ENCODE measurements at regions of chr10 and their contacts with region 1.

Region 1: GRCh38 chr10:110354322-110354766 is 49.6 kb upstream of the SMNDC1 start:
- DNase-seq: peak; percentile 49 to 75 (median 56)
- ATAC-seq: peak; percentile 94
- H3K4me3 ChIP-seq: no peak overlapping the region
- H3K27ac ChIP-seq: no peak overlapping the region
- H3K4me1 ChIP-seq: peaks cover 0 to 8% of the 10 kb centered on the region in 2 experiments; a peak in 3 of 5 replicates
- H3K27me3 ChIP-seq: peaks cover 0 to 45% of the 10 kb centered on the region in 2 experiments; a peak in 4 of 5 replicates
- CTCF ChIP-seq: peak; percentile 74 to 83 (median 81)
- EP300 ChIP-seq: no peak
- POLR2A ChIP-seq: no peak
- RAD21 ChIP-seq: peak; percentile 49 to 83

Region 2: GRCh38 chr10:110395725-110396651 is 41.6 kb after region 1 on chr10:
- CTCF ChIA-PET with region 1: no interaction called
- POLR2A ChIA-PET with region 1: no interaction called
- in situ Hi-C with region 1: no loop called
- intact Hi-C with region 1: loop called (anchors 5 kb)
- DNase-seq: peak in 3 of 4 experiments; percentile 27 to 44 (median 32)
- ATAC-seq: no peak
- H3K4me3 ChIP-seq: no peak overlapping the region
- H3K27ac ChIP-seq: no peak overlapping the region
- H3K4me1 ChIP-seq: peaks cover 0 to 11% of the 10 kb centered on the region in 2 experiments; a peak in 4 of 5 replicates
- H3K27me3 ChIP-seq: peaks cover 2 to 27% of the 10 kb centered on the region in 2 experiments; a peak in 3 of 5 replicates
- CTCF ChIP-seq: no peak
- EP300 ChIP-seq: 0 out of 2 replicates have a peak, but pooled peaks have one; percentile 38
- POLR2A ChIP-seq: no peak
- RAD21 ChIP-seq: no peak

Region 3: GRCh38 chr10:110535958-110536891 is 181.9 kb after region 1 on chr10:
- CTCF ChIA-PET with region 1: interaction called, 4 read pairs
- POLR2A ChIA-PET with region 1: no interaction called
- in situ Hi-C with region 1: no loop called
- intact Hi-C with region 1: loop called (anchors 1 kb)
- DNase-seq: peak in 2 of 4 experiments; percentile 28 to 54
- ATAC-seq: peak; percentile 92
- H3K4me3 ChIP-seq: no peak overlapping the region
- H3K27ac ChIP-seq: no peak overlapping the region
- H3K4me1 ChIP-seq: peaks cover 0 to 4% of the 10 kb centered on the region in 2 experiments; a peak in 2 of 5 replicates
- H3K27me3 ChIP-seq: no peaks in the 10 kb centered on the region
- CTCF ChIP-seq: peak; percentile 60 to 75 (median 62)
- EP300 ChIP-seq: no peak
- POLR2A ChIP-seq: no peak
- RAD21 ChIP-seq: peak; percentile 77 to 89

Region 4: GRCh38 chr10:110547139-110547761 is 192.9 kb after region 1 on chr10:
- CTCF ChIA-PET with region 1: interaction called, 3 read pairs
- POLR2A ChIA-PET with region 1: interaction called, 6 read pairs
- in situ Hi-C with region 1: no loop called
- intact Hi-C with region 1: loop called (anchors 1 kb)
- DNase-seq: peak; percentile 54 to 57 (median 55)
- ATAC-seq: peak; percentile 75
- H3K4me3 ChIP-seq: no peak overlapping the region
- H3K27ac ChIP-seq: no peak overlapping the region
- H3K4me1 ChIP-seq: no peaks in the 10 kb centered on the region
- H3K27me3 ChIP-seq: no peaks in the 10 kb centered on the region; a peak in 2 of 5 replicates
- CTCF ChIP-seq: peak; percentile 61 to 77 (median 67)
- EP300 ChIP-seq: no peak
- POLR2A ChIP-seq: no peak
- RAD21 ChIP-seq: peak; percentile 70 to 82

Measured in K562 (cell line).